ENCODE measurements at regions of chr2 and their contacts with region 1.

Region 1: DNA sequence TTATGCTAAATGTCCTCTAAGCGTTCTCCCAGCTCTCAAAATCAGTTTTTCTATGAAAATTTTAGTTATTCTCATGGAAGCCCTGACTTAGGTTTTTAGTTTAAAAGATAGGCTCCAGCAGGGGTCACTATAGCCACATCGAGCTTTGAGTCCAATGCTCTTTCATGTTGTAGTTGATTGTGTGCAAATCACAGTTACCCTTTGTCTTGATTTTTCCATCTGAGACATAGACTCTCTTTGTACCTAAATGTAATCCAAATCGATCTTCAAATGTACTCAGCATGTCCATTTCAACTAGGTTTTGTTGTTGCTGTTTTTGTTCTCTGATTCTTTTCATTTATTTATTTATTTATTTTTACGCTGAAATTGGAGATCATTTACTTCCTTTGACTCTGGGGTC is 26.4 kb upstream of the MSTN start:
- DNase-seq: peak; percentile 74
- H3K4me3 ChIP-seq: no peak overlapping the region
- H3K27ac ChIP-seq: no peak overlapping the region
- H3K4me1 ChIP-seq: no peaks in the 10 kb centered on the region
- CTCF ChIP-seq: peak; percentile 93

Region 2: DNA sequence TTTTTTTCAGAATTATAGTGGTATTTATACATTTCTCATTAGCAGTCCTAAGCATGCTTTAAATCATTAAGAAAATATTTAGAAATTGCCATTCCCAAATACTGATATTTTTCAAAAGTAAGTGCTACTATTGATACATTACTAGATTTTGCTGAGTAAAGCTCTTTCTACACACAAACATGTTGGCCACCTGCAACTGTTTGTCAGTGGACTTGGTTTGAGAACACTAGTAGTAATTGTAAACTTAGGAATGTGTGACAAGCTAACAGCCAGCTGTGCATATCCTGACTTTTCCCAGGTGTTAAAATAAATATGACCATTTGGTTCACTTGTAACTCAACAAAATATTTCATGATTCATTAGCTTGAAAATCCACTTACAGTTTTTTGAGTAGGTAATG is 129.5 kb before region 1 on chr2:
- CTCF ChIA-PET with region 1: no interaction called
- POLR2A ChIA-PET with region 1: no interaction called
- intact Hi-C with region 1: no loop called
- DNase-seq: no peak
- H3K4me3 ChIP-seq: no peak overlapping the region
- H3K27ac ChIP-seq: no peak overlapping the region
- H3K4me1 ChIP-seq: peaks cover 17% of the 10 kb centered on the region
- CTCF ChIP-seq: no peak

Region 3: DNA sequence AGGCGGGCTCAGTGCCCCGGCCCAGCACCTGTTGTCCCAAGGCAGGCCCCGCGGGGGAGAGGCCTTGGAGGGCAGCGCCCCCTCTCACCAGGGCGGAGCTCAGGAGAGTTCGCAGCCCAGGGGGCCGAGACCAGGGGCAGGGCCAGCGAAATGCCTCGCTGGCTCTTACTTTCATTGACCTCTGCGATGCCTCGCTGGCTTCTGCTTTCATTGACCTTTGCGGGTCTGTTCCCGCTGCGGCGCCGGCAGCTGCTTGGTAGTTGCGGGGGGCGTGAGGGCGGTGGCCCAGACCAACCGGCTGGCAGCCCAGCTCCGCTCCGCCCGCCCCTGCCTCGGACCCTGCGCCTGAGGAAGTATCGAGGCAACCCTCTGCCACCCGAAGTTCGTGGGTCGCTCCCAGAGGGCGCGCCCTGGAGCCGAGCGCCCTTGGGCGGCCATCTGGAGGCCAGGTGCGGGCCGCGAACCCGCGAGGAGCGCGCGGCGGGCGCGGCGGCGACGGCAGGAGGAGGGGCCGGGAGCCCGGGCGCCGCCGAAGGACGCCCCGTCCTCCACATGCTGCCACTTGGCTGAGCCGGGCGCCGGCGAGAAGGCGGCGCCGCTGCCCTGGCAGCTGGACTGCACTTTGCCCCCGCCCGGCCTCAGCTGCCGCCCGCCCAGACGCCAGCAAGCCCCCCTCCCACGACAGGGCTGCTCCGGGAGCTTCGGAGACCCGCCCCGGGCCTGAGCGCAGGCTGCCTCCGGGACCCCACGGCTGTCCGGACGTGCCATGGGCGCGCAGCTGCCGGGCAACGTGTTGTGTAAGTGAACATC is 91.6 kb after region 1 on chr2:
- CTCF ChIA-PET with region 1: interaction called, 3 read pairs
- POLR2A ChIA-PET with region 1: no interaction called
- intact Hi-C with region 1: loop called (anchors 2 kb)
- DNase-seq: peak; percentile 22
- H3K4me3 ChIP-seq: peak overlapping the region; percentile 56
- H3K27ac ChIP-seq: no peak overlapping the region
- H3K4me1 ChIP-seq: peaks cover 9% of the 10 kb centered on the region
- CTCF ChIP-seq: peak; percentile 63

Region 4: GRCh38 chr2:190277234-190278112 is 188.6 kb after region 1 on chr2:
- CTCF ChIA-PET with region 1: no interaction called
- POLR2A ChIA-PET with region 1: interaction called, 3 read pairs
- intact Hi-C with region 1: loop called (anchors 1 kb)
- DNase-seq: peak; percentile 22
- H3K4me3 ChIP-seq: no peak overlapping the region
- H3K27ac ChIP-seq: no peak overlapping the region
- H3K4me1 ChIP-seq: no peaks in the 10 kb centered on the region
- CTCF ChIP-seq: peak; percentile 80

Region 5: GRCh38 chr2:190376591-190377245 is 287.8 kb after region 1 on chr2:
- CTCF ChIA-PET with region 1: no interaction called
- POLR2A ChIA-PET with region 1: no interaction called
- intact Hi-C with region 1: loop called (anchors 2 kb)
- DNase-seq: no peak
- H3K4me3 ChIP-seq: no peak overlapping the region
- H3K27ac ChIP-seq: no peak overlapping the region
- H3K4me1 ChIP-seq: no peaks in the 10 kb centered on the region
- CTCF ChIP-seq: no peak

Region 6: DNA sequence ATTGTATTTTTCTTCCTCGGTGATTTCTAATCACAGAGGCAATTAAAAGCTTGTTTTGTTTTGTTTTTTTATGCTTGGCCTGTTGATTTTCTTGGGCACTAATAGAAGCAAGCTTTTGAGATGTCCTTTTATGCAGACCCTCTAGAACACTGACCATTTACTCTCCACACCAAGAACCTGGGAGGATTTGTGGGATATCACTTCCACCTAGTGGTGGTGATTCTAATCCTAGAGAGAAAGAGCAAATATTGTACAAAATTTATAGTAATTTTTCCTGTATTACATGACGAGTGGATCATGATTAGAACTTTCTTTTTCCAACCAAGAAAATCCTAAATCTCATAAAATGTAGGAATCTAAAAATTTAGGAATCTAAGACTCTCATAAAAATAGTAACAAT is 422.2 kb after region 1 on chr2:
- CTCF ChIA-PET with region 1: no interaction called
- POLR2A ChIA-PET with region 1: no interaction called
- intact Hi-C with region 1: loop called (anchors 10 kb)
- DNase-seq: peak; percentile 7
- H3K4me3 ChIP-seq: no peak overlapping the region
- H3K27ac ChIP-seq: no peak overlapping the region
- H3K4me1 ChIP-seq: peaks cover 13% of the 10 kb centered on the region
- CTCF ChIP-seq: peak; percentile 70